ENCODE measurements at regions of chr1 and their contacts with region 1.

Region 1: GRCh38 chr1:59229138-59229537 is 67.8 kb upstream of the FGGY start:
- DNase-seq: no peak
- H3K4me3 ChIP-seq: no peak overlapping the region
- H3K27ac ChIP-seq: no peak overlapping the region
- H3K4me1 ChIP-seq: peaks cover 0 to 4% (median 0%) of the 10 kb centered on the region in 4 donors
- H3K27me3 ChIP-seq: no peaks in the 10 kb centered on the region
- CTCF ChIP-seq: no peak
- EP300 ChIP-seq: no peak
- POLR2A ChIP-seq: no peak

Region 2: DNA sequence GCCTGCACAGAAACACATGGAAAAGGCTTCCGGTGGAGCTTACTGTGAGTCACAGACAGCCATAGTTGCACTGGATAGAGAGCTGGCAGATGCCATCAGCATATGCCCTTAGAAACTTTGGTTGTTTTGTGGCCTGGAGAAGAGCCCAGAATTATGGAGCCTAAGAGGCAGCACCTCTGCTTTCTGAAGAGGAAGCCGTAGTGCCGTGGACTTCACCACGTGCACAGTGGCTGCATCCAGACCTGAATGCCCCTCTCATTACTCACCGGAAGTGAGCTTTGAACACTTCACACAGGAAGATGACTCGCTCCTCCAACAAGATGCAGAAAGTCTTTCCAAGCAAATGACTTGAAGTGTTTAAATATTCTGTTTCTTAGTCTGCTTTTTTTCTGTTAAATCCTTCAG is 473.7 kb before region 1 on chr1:
- in situ Hi-C with region 1: no loop called
- intact Hi-C with region 1: no loop called
- DNase-seq: peak; percentile 51
- H3K4me3 ChIP-seq: no peak overlapping the region
- H3K27ac ChIP-seq: peak overlapping the region; percentile 45 to 73 (median 66)
- H3K4me1 ChIP-seq: peaks cover 3 to 14% (median 11%) of the 10 kb centered on the region in 4 donors
- H3K27me3 ChIP-seq: no peaks in the 10 kb centered on the region
- CTCF ChIP-seq: no peak
- EP300 ChIP-seq: no peak
- POLR2A ChIP-seq: no peak

Region 3: DNA sequence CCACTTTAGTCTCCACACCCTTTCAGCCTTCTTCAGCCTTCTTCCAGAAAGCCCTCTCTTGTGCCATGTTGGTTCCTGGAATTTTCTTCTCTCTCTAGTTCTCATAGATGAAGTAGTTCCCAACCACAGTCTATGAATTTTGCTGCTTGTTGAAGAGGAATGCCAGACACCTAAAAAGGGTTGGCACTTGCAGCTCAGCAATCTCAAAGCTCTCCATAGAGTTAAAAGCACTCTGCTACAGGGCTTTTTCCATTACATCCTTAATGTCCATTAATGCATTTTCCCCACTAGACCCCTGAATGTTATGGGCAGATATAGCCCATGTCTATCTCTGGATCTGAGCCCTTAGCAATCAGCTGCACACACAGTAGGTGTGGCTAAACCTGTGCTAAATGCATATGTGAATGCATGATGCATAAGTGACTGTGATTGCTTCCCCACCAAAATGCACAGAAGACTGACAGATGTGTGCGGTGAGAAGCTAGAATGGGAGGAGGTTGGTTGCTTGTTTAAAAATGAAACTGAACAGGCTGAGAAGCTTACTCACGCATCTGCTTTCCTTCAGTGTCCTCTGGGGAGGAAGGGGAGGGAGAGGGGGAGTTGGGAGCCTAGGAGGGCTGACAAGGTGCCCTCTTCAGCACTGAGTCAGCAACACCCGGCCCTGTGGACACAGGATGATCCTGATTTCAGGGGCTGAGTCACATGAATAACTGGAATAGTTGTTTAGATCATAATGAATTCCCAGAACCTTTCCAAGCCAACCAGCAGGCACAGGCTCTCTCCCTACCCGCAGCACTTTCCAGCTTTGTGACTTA is 78.4 kb before region 1 on chr1:
- in situ Hi-C with region 1: no loop called
- intact Hi-C with region 1: loop called (anchors 5 kb)
- DNase-seq: peak; percentile 68
- H3K4me3 ChIP-seq: no peak overlapping the region
- H3K27ac ChIP-seq: peak overlapping the region; percentile 76 to 89 (median 81)
- H3K4me1 ChIP-seq: peaks cover 0 to 32% (median 17%) of the 10 kb centered on the region in 4 donors
- H3K27me3 ChIP-seq: no peaks in the 10 kb centered on the region
- CTCF ChIP-seq: no peak
- EP300 ChIP-seq: peak; percentile 84
- POLR2A ChIP-seq: no peak

Region 4: DNA sequence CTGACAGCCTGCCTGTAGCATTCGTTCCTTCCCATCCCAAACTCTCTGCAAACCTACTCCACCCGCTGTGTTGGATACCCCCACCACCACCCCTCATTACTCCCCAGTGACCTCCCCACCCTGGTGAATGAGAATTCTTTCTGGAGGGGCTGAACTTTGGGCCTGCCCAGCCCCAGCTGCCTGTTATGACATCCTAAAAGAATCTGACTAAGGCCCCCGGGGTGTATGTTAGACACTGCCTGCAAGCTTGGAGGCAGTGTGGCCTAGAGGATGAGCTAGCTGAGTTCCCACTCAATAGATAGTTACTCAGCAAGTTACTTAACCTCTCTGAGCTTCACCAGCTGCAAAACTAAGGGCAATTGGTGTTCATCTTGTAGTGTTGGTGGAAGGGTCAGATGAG is 42.5 kb before region 1 on chr1:
- in situ Hi-C with region 1: no loop called
- intact Hi-C with region 1: no loop called
- DNase-seq: no peak
- H3K4me3 ChIP-seq: no peak overlapping the region
- H3K27ac ChIP-seq: no peak overlapping the region
- H3K4me1 ChIP-seq: no peaks in the 10 kb centered on the region
- H3K27me3 ChIP-seq: no peaks in the 10 kb centered on the region
- CTCF ChIP-seq: no peak
- EP300 ChIP-seq: no peak
- POLR2A ChIP-seq: no peak